MCF 10A (cell line): ENCODE measurements at regions of chr3 and their contacts with region 1.

Region 1: DNA sequence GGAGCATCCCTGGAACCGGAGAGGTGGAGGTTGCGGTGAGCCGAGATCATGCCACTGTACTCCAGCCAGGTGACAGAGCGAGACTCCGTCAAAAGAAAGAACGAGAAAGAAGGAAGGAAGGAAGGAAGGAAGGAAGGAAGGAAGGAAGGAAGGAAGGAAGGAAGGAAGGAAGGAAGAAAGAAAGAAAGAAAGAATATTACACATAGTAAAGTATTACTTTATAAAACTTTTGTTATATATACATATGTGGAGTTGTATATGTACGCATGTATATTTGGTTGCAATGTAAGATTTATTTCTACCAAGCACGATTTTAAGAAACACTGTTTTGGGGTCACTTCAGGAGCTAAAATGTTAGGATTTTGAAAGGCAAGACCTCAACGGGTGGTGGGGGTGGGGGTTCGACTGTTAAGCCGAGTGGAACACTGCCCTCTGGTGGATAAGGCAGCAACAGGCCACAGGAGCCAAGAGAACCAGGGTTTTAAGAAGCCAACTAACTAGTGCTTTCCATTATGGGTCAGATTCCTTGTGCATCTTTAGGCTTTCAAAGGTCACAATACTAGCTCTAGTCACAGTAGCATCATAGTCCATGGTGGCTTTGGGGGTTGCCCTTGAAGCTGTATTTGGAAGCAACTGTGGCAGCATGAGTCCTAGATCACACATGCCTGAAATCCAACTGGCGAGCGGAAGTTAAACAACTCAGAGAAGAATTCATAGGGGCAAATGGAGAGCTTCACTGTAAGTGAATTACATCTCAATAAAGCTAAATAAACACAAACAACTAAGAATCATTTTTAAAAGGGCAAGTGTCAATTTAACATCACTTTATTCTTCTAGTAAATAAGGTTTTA is 22.5 kb downstream of the GLB1 start:
- DNase-seq: peak; percentile 71
- H3K4me3 Mint-ChIP-seq: no peak overlapping the region
- H3K27ac Mint-ChIP-seq: no peak overlapping the region
- H3K4me1 Mint-ChIP-seq: peaks cover 4% of the 10 kb centered on the region
- H3K27me3 Mint-ChIP-seq: no peaks in the 10 kb centered on the region
- CTCF ChIP-seq: peak; percentile 81

Region 2: GRCh38 chr3:32646761-32647160 is 427.7 kb before region 1 on chr3:
- CTCF ChIA-PET with region 1: no interaction called
- POLR2A ChIA-PET with region 1: no interaction called
- intact Hi-C with region 1: no loop called
- DNase-seq: no peak
- H3K4me3 Mint-ChIP-seq: no peak overlapping the region
- H3K27ac Mint-ChIP-seq: no peak overlapping the region
- H3K4me1 Mint-ChIP-seq: no peaks in the 10 kb centered on the region
- H3K27me3 Mint-ChIP-seq: no peaks in the 10 kb centered on the region
- CTCF ChIP-seq: no peak

Region 3: DNA sequence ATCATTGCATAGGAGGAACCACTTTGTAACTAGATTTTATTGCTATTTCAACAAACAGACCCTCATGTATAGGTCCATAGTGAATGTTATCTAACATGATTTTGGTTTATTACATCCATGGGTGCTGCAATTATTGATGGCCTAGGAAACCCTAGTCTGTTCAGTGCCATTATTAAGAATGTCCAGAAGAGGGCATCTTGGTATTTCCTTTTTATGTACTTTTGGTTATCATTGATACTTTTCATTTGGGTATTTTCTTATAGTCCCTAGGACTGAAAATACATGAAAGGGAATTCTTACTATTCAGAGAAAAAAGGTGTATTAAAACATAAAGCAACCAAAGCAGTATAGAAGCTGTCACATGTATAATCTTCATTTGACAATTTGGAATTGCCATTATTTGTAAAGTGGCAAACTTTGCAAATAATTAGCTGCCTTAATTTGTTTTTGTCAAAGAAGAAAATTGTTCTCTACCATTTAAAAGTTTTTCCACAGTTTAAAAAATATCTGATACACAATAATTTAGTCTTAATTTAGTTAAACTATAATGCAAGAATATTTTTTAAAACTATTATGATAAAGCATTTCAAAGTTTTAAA is 340.7 kb before region 1 on chr3:
- CTCF ChIA-PET with region 1: interaction called, 22 read pairs
- POLR2A ChIA-PET with region 1: no interaction called
- intact Hi-C with region 1: loop called (anchors 5 kb)
- DNase-seq: peak; percentile 45
- H3K4me3 Mint-ChIP-seq: no peak overlapping the region
- H3K27ac Mint-ChIP-seq: no peak overlapping the region
- H3K4me1 Mint-ChIP-seq: no peaks in the 10 kb centered on the region
- H3K27me3 Mint-ChIP-seq: no peaks in the 10 kb centered on the region
- CTCF ChIP-seq: peak; percentile 49

Region 4: DNA sequence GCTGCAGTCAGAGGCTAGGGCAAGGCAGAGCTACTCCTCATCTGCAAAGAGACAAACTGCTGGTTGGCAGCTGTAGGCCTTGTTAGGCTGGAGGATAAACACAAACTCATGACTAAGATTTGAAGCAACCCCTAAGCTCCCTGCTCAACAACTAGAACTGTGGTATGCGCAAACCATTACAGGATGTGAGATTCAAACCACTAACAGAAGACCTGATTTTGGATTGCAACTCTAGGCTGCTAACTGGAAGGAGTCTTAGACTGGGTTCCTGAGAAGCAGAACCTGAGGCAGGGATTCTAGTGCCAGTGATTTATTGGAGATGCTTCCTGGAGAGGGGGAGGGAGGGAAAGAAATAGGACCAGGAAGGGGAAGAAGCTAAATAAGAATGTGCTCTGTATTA is 100.5 kb before region 1 on chr3:
- CTCF ChIA-PET with region 1: interaction called, 12 read pairs
- POLR2A ChIA-PET with region 1: no interaction called
- intact Hi-C with region 1: no loop called
- DNase-seq: no peak
- H3K4me3 Mint-ChIP-seq: no peak overlapping the region
- H3K27ac Mint-ChIP-seq: no peak overlapping the region
- H3K4me1 Mint-ChIP-seq: no peaks in the 10 kb centered on the region
- H3K27me3 Mint-ChIP-seq: no peaks in the 10 kb centered on the region
- CTCF ChIP-seq: no peak

Region 5: GRCh38 chr3:33030802-33031201 is 43.6 kb before region 1 on chr3:
- CTCF ChIA-PET with region 1: interaction called, 15 read pairs
- POLR2A ChIA-PET with region 1: no interaction called
- intact Hi-C with region 1: no loop called
- DNase-seq: no peak
- H3K4me3 Mint-ChIP-seq: no peak overlapping the region
- H3K27ac Mint-ChIP-seq: peak overlapping the region; percentile 25
- H3K4me1 Mint-ChIP-seq: peaks cover 11% of the 10 kb centered on the region
- H3K27me3 Mint-ChIP-seq: no peaks in the 10 kb centered on the region
- CTCF ChIP-seq: no peak

Region 6: DNA sequence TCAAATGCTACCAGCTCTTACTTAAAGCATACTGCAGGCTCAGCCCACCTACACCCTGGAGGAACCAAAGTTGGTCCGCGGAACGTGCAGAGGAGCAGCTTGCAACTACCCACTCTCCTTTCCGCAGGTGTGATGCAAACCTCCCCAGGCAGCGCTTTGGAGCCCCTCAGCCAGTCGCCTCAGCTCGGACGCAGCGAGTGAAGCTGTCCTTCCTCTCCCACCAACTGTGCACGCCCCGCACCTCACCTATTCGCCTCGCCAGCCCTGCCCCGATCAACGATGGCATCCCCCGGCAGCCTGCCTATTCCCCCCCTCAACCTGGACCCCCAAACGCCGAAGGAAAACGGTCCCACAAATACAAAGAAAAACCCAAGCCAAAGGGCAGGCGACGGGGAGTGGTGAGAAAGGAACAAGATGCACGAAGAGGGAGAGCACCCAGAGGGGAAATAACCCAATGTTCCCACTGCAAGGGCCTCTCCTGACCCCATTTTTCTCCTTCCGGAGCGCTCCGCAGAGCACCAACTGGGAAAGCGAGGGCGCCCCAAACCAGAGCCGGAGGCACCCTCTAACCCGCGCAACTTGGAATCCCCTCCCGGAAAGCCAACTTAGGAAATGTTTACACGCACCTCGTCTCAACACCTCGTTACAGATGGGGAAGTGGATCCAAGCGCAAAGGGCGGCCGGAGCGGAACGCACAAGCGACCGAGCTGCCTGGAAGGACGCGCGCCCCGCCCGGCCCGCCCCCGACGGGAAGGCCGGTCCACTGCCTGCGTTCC is 21.8 kb after region 1 on chr3:
- CTCF ChIA-PET with region 1: interaction called, 13 read pairs
- POLR2A ChIA-PET with region 1: no interaction called
- intact Hi-C with region 1: no loop called
- DNase-seq: peak; percentile 36
- H3K4me3 Mint-ChIP-seq: peak overlapping the region; percentile 93
- H3K27ac Mint-ChIP-seq: peak overlapping the region; percentile 86
- H3K4me1 Mint-ChIP-seq: peaks cover 7% of the 10 kb centered on the region
- H3K27me3 Mint-ChIP-seq: no peaks in the 10 kb centered on the region
- CTCF ChIP-seq: no peak

Region 7: GRCh38 chr3:33218446-33219174 is 144.2 kb after region 1 on chr3 and contains the start of gene SUSD5:
- CTCF ChIA-PET with region 1: no interaction called
- POLR2A ChIA-PET with region 1: no interaction called
- intact Hi-C with region 1: no loop called
- DNase-seq: peak; percentile 41
- H3K4me3 Mint-ChIP-seq: peak within 1 kb of the TSS; percentile 71
- H3K27ac Mint-ChIP-seq: no peak within 1 kb of the TSS
- H3K4me1 Mint-ChIP-seq: peaks cover 10% of the 10 kb centered on the region
- H3K27me3 Mint-ChIP-seq: peaks cover 15% of the 10 kb centered on the region
- CTCF ChIP-seq: no peak
- total RNA-seq, gene SUSD5: 3.4 and 3.8 TPM in 2 replicates

Region 8: DNA sequence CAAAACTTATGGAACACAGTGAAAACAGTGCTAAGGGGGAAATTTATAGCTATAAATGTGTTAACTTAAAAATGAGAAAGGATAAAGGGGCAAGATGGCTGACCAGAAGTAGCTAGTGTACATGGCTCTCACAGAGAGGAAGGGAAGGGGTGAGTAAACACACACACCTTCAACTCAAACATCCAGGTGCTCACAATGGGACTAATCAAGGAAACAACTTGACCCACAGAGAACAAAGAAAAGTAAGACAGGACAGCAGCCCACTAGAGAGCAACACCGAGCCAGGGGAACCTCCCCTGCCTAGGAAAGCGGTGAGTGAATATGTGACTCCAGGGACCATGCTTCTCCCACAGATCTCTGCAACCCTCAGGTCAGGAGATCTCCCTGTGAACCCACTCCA is 450.8 kb after region 1 on chr3:
- CTCF ChIA-PET with region 1: no interaction called
- POLR2A ChIA-PET with region 1: no interaction called
- intact Hi-C with region 1: no loop called
- DNase-seq: no peak
- H3K4me3 Mint-ChIP-seq: no peak overlapping the region
- H3K27ac Mint-ChIP-seq: no peak overlapping the region
- H3K4me1 Mint-ChIP-seq: no peaks in the 10 kb centered on the region
- H3K27me3 Mint-ChIP-seq: no peaks in the 10 kb centered on the region
- CTCF ChIP-seq: no peak